ENCODE measurements at regions of chr3 and their contacts with region 1.

Region 1: DNA sequence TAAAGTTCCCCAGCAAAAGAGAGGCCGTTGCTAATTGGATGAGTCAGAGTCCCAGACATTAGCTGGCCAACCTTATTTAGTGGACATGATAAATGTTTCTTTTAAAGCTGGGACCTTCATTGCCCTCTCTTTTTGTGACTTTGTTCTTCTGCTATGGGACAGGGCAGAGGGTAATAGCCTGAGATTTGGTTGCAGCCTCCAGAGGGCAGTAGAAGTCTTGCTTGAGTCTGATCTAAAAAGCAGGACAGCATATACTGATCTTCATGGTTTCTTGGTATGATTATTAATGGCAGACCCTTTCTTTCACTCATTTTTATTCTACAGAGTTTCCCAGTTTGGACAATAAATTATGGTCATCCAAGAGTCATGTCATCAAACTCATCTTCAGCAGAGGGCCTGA is 25.1 kb upstream of the ZKSCAN7 start:
- DNase-seq: peak; percentile 44
- H3K4me3 Mint-ChIP-seq: no peak overlapping the region
- H3K27ac Mint-ChIP-seq: no peak overlapping the region
- H3K4me1 Mint-ChIP-seq: no peaks in the 10 kb centered on the region
- H3K27me3 Mint-ChIP-seq: peaks cover 17% of the 10 kb centered on the region

Region 2: DNA sequence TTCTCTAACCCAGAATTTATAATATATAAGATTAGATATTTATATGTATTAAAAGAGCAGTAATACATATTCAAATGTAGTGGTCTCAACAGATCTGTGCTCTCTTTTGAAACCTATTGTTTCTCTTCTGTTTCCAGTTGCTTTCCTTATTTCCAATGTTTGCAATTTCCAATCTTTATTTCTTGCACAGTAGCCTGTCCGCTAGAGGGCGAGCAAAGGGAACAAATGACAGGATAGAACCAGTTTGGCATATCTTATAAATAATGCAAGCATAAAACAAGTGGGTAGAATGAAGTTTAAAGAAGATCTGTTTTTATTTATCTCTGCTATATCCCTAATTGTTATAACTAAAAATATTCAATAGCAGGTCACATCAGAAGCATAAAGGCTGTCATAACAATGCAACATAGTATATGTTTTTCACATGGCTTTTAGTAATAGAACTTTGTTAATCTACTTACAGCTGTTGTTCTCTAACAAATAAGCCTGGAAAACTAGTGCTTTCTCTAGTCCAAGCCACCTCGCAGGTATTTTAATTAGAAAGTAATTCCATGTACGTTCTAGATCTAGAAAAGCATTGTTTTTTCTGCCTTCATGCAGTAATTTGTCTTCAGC is 206.5 kb before region 1 on chr3:
- CTCF ChIA-PET with region 1: interaction called, 8 read pairs
- intact Hi-C with region 1: loop called (anchors 2 kb)
- DNase-seq: peak; percentile 79
- H3K4me3 Mint-ChIP-seq: no peak overlapping the region
- H3K27ac Mint-ChIP-seq: no peak overlapping the region
- H3K4me1 Mint-ChIP-seq: peaks cover 3% of the 10 kb centered on the region
- H3K27me3 Mint-ChIP-seq: peaks cover 3% of the 10 kb centered on the region

Region 3: DNA sequence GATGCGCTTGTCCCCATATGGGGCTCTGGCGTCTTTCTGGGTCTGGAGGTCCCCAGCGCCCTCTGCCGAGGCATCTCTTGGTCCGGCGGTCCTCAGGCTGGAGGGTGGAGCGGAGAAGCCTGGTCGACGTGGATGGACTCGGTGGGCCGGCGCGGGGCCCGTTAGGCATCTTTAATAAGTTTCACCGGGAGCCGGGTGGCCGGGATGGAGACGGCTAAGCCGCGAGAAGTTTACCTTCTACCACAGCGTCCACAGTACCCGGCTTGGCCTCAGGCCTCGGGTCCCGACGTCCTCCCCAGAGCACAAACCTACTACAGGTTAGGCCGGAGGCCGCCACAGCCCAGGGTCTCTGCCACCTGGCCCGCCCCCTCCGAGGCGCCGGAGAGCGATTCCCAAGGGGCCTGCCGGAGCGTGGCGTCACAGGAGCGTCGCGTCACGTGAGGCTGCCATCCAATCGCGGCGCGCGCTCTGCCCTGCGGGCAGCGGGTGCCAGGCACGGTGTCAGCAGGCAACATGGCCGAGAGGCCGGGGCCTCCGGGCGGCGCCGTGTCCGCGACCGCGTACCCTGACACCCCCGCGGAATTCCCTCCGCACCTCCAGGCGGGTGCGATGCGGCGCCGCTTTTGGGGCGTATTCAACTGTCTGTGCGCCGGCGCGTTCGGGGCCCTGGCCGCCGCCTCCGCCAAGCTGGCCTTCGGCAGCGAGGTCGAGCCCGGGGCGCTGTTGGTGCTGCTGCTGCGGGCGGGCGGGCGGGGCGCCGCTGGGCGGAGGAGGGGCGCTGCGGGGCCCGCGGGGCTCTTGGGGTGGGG is 331.7 kb after region 1 on chr3 and contains the start of gene TMEM42:
- CTCF ChIA-PET with region 1: no interaction called
- intact Hi-C with region 1: loop called (anchors 2 kb)
- DNase-seq: peak; percentile 86
- H3K4me3 Mint-ChIP-seq: peak within 1 kb of the TSS; percentile 84
- H3K27ac Mint-ChIP-seq: peak within 1 kb of the TSS; percentile 78
- H3K4me1 Mint-ChIP-seq: peaks cover 38% of the 10 kb centered on the region
- H3K27me3 Mint-ChIP-seq: no peaks in the 10 kb centered on the region
- total RNA-seq, gene TMEM42: 13.9 to 15.8 TPM

Measured in activated naive CD4-positive, alpha-beta T cell treated with anti-CD3 and anti-CD28 coated beads for 36 hours (primary cell).